Gastrocnemius medialis (tissue), 4 donors: ENCODE measurements at regions of chr5 and their contacts with region 1.

Region 1: DNA sequence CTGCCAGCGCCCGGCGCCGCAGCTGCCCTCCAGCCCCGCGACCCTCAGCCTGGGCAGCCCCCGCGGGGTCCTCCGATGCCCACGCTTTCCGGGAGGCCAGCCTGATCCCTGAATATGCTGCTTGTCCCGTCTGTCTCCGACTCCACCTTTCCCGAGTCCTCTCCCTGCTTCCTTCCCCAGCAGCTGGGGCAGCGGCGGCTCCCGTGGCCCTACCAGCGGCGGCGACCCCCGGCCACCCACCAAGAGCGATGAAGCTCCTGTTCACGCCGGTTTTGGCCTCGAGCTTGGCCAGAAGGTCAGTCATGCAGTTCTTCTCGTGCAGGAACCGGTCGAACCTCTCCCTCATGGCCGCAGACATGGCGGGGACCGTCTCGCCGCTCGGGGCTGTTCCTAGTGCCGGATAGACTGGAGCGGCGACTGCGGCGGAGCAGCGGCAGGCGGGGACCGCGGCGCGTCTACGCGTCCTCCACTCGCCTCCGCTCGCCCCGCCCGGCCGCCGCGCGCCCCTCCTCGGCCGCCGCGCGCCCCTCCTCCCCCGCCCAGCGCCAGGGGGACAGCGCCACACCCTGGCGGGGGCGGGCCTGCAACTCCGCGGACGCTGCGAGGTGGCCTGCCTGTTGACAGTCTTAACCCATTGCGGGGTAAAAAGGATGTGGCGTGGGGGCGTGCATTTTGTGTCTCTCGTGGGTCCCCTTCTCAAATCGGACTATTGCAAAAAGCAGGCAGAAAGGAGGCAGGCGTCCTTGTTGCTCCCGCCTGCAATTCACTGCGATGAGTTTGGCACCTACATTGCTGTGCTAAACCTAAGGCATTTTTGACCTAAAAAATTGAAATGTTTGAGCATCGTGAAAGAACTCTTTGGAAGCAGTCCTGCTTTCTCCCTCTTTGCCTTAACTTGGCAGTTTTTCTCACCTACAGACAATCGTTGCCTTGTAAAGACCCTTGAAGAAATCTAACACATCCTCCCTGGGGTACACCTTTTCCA is at the start of gene REEP5:
- DNase-seq: peak; percentile 66 to 80
- ATAC-seq: peak; percentile 80 to 83
- H3K4me3 ChIP-seq: peak within 1 kb of the TSS; percentile 65 to 100 (median 88)
- H3K27ac ChIP-seq: peak within 1 kb of the TSS; percentile 93 to 100 (median 98)
- H3K4me1 ChIP-seq: peaks cover 36 to 42% of the 10 kb centered on the region in 2 donors
- H3K27me3 ChIP-seq: no peaks in the 10 kb centered on the region
- CTCF ChIP-seq: peak; percentile 74 to 96 (median 90)
- POLR2A ChIP-seq: peak; percentile 84 to 89
- total RNA-seq, gene REEP5: 67.2 to 116 (median 89.9) TPM

Region 2: GRCh38 chr5:112848116-112848811 is 73.9 kb before region 1 on chr5:
- in situ Hi-C with region 1: loop called in 1 of 4 experiments (anchors 10 kb)
- intact Hi-C with region 1: loop called (anchors 5 kb)
- DNase-seq: no peak
- ATAC-seq: peak; percentile 96 to 99
- H3K4me3 ChIP-seq: peak overlapping the region; percentile 4 to 32 (median 28)
- H3K27ac ChIP-seq: peak overlapping the region; percentile 19 to 53 (median 42)
- H3K4me1 ChIP-seq: no peaks in the 10 kb centered on the region
- H3K27me3 ChIP-seq: no peaks in the 10 kb centered on the region
- CTCF ChIP-seq: peak; percentile 41 to 66 (median 52)
- POLR2A ChIP-seq: no peak

Region 3: GRCh38 chr5:112860929-112861637 is 61.0 kb before region 1 on chr5 and contains the start of gene SRP19:
- in situ Hi-C with region 1: loop called in 2 of 4 experiments (anchors 10 kb)
- intact Hi-C with region 1: loop called (anchors 1 kb)
- DNase-seq: peak; percentile 92 to 94
- ATAC-seq: peak; percentile 99
- H3K4me3 ChIP-seq: peak within 1 kb of the TSS; percentile 71 to 99 (median 89)
- H3K27ac ChIP-seq: peak within 1 kb of the TSS; percentile 84 to 90 (median 86)
- H3K4me1 ChIP-seq: peaks cover 20 to 25% of the 10 kb centered on the region in 2 donors
- H3K27me3 ChIP-seq: no peaks in the 10 kb centered on the region
- CTCF ChIP-seq: no peak
- POLR2A ChIP-seq: peak; percentile 69 to 81
- total RNA-seq, gene SRP19: 40.4 to 63.8 (median 55.0) TPM

Region 4: GRCh38 chr5:112960315-112960714 is 38.2 kb after region 1 on chr5:
- in situ Hi-C with region 1: no loop called
- intact Hi-C with region 1: loop called (anchors 5 kb)
- DNase-seq: no peak
- ATAC-seq: no peak
- H3K4me3 ChIP-seq: no peak overlapping the region
- H3K27ac ChIP-seq: peak overlapping the region in 3 of 4 donors; percentile 59 to 68 (median 65)
- H3K4me1 ChIP-seq: peaks cover 37 to 49% of the 10 kb centered on the region in 2 donors
- H3K27me3 ChIP-seq: no peaks in the 10 kb centered on the region
- CTCF ChIP-seq: no peak
- POLR2A ChIP-seq: no peak

Region 5: DNA sequence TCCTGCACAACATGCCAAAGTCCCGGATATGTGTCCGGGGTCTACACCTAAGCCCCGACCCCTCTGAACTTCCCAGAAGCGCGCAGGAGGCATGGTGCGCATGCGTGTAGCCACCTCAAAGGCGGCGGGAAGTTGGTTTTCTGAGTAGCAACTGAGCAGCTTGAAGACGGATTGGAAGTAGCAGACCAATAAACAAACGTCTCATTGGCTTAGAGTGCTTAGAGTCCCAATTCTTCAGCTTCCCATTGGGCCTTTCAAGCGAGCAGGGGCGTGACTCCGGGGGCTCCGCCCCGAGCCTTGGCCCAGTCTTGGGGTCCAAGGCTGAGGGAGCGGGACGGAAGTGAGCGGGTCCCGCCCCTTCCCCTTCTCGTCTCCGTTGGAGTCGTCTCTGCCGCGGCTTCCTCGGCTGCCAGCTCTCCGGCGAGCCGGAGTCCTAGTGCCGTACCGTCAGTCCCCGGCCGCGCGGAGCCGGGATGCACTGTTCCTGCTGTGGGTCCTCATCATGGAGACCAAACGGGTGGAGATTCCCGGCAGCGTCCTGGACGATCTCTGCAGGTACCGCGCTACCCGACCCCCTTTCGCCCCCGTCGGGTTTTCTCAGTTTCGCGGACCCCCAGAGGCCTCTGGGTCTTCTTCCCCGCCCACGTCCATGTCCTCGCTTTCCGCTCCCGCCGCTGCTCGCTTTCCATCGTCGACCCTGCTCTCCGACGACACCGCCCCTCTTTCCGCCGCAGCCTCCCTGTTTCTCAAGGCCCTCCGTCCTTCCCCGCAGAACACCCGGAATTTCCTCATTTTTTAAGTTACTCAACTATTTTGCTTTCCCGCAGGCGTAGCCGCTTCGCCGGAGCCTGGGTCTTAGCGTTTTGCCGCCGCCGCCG is 54.5 kb after region 1 on chr5 and contains the start of gene DCP2:
- in situ Hi-C with region 1: no loop called
- intact Hi-C with region 1: loop called (anchors 1 kb)
- DNase-seq: peak; percentile 92 to 95
- ATAC-seq: peak; percentile 100
- H3K4me3 ChIP-seq: peak within 1 kb of the TSS; percentile 69 to 97 (median 92)
- H3K27ac ChIP-seq: peak within 1 kb of the TSS; percentile 84 to 92 (median 90)
- H3K4me1 ChIP-seq: peaks cover 33 to 34% of the 10 kb centered on the region in 2 donors
- H3K27me3 ChIP-seq: no peaks in the 10 kb centered on the region
- CTCF ChIP-seq: peak in 1 of 5 experiments; percentile 1
- POLR2A ChIP-seq: peak; percentile 72 to 82
- total RNA-seq, gene DCP2: 9.8 to 30.9 (median 27.2) TPM

Region 6: GRCh38 chr5:113187906-113188305 is 265.8 kb after region 1 on chr5:
- in situ Hi-C with region 1: no loop called
- intact Hi-C with region 1: no loop called
- DNase-seq: no peak
- ATAC-seq: no peak
- H3K4me3 ChIP-seq: no peak overlapping the region
- H3K27ac ChIP-seq: no peak overlapping the region
- H3K4me1 ChIP-seq: peaks cover 0 to 8% of the 10 kb centered on the region in 2 donors
- H3K27me3 ChIP-seq: no peaks in the 10 kb centered on the region
- CTCF ChIP-seq: no peak
- POLR2A ChIP-seq: no peak